ENCODE measurements at regions of chr2 and their contacts with region 1.

Region 1: DNA sequence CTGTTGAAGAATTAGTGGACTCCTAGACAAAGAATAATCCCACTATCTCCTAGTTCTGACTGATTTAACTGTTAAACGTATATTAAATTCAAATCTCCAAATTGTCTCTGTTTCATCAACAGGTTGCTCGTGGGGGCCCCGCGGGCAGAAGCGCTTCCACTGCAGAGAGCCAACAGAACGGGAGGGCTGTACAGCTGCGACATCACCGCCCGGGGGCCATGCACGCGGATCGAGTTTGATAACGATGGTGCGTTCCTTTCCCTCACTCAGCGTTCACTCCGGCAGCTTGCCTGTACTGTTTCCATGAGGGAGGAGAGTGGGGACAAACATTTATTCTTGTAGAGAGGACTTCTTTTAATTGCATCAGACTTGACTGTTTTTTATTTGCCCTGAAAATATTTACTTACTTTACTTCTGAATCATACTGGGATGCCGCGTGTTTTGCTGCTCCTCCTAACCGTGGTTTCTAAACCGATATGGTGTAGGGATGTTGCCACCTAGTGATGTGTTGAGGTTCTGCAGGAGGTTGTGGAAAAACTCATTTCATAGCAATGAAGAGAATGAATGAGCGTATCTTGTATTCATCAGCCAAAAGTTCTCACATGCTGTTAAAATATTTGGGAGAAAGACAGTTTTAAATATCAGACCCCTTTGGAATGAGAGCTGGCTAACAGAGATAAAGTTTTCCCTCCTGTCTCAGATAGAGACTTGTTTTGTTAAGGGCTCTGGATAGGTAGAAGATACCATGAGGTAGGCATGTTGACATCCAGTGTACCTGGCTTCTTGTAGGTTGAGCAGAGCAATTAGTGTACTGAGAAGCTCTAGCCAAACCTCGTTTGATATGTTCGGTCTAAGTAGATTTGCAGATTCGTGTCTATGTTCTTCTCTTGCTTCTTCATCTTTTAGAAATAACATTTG is 38.3 kb downstream of the ITGA6 start:
- DNase-seq: peak; percentile 75
- ATAC-seq: peak; percentile 71
- H3K4me3 ChIP-seq: no peak overlapping the region
- H3K4me3 Mint-ChIP-seq: no peak overlapping the region
- H3K27ac ChIP-seq: no peak overlapping the region
- H3K27ac Mint-ChIP-seq: no peak overlapping the region
- H3K4me1 ChIP-seq: peaks cover 39 to 43% of the 10 kb centered on the region in 2 donors
- H3K4me1 Mint-ChIP-seq: peaks cover 49% of the 10 kb centered on the region
- H3K27me3 ChIP-seq: no peaks in the 10 kb centered on the region
- H3K27me3 Mint-ChIP-seq: peaks cover 8% of the 10 kb centered on the region
- CTCF ChIP-seq: peak; percentile 87

Region 2: DNA sequence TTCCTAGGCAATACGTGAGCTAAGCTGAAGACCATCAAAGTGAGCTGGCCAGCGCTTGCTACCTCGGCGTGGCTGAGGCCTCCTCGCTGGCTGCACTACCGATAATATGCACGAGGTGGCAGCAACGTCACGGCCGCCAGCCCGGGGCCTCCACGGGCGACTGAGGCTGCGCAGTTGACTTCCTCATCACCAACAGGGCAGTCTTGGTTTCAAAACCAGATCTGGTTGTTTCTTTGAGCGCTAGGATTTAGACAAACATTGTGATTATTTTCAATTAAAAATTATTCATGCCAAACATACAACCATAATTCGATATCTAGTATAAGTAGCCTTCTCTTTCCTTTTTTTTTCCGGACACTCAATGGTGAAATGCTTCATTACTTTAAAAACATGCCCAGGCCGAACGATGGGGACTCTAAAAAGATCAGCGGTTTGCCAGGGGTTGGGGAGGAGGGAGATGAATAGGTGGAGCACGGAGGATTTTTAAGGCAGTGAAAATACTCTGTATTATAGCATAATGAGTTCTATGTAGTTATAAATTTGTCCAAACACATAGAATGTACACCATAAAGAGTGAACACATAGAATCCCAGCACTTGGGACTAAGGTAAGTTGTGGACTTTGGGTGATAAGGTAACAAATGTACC is 891.4 kb before region 1 on chr2:
- CTCF ChIA-PET with region 1: interaction called, 19 read pairs
- POLR2A ChIA-PET with region 1: no interaction called
- intact Hi-C with region 1: loop called (anchors 1 kb)
- DNase-seq: peak; percentile 87
- ATAC-seq: peak; percentile 100
- H3K4me3 ChIP-seq: peak overlapping the region in 1 of 5 experiments; percentile 5
- H3K4me3 Mint-ChIP-seq: peak overlapping the region; percentile 37
- H3K27ac ChIP-seq: no peak overlapping the region
- H3K27ac Mint-ChIP-seq: no peak overlapping the region
- H3K4me1 ChIP-seq: peaks cover 0 to 4% of the 10 kb centered on the region in 2 donors
- H3K4me1 Mint-ChIP-seq: peaks cover 6% of the 10 kb centered on the region
- H3K27me3 ChIP-seq: no peaks in the 10 kb centered on the region
- H3K27me3 Mint-ChIP-seq: peaks cover 8% of the 10 kb centered on the region
- CTCF ChIP-seq: peak; percentile 97

Region 3: DNA sequence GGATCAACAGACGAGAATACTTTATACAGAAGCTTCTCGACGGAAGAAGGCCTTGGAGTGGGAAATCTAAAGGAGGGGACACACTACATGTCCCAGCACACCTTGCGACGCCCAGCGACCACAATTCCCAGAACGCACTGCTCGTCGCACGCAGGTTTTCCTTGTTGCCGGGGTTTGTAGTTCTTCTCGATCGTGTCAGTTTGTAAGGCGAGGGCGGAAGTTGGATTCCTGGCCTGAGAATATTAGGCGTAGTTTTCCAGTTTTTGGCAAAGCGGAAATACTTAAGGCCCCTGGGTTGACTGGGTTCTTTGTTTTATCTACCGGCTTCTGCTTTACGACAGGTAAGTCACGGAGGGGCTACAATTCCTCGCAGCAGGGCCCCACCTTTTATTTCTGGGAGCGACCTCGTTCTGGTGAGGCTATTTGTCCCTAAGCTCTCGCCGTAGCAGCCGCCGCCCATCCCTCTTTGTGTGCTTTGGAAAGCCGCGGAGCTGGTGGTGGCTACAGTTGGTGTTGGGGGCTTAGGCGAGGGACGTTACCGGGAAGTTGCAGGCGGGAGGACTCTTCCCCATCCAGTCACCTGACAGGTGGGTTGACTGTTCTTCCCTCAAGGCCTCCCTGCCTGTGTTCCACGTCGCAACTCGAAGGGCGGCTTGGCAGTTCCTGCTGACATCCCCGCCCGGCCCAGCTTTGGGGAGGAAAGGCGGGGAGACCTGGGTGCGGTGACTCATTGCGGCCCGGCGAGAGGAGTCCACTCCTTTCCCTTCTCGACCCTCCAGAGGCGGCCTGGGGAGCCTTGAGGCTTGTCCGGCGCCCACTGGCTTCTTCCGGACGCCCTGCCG is 778.2 kb before region 1 on chr2 and contains the start of gene DYNC1I2:
- CTCF ChIA-PET with region 1: interaction called, 3 read pairs
- POLR2A ChIA-PET with region 1: no interaction called
- intact Hi-C with region 1: loop called (anchors 5 kb)
- DNase-seq: peak; percentile 88
- ATAC-seq: peak; percentile 92
- H3K4me3 ChIP-seq: peak within 1 kb of the TSS; percentile 77 to 89 (median 88)
- H3K4me3 Mint-ChIP-seq: peak within 1 kb of the TSS; percentile 93
- H3K27ac ChIP-seq: peak within 1 kb of the TSS; percentile 58 to 83
- H3K27ac Mint-ChIP-seq: peak within 1 kb of the TSS; percentile 85
- H3K4me1 ChIP-seq: peaks cover 12 to 13% of the 10 kb centered on the region in 2 donors
- H3K4me1 Mint-ChIP-seq: peaks cover 18% of the 10 kb centered on the region
- H3K27me3 ChIP-seq: no peaks in the 10 kb centered on the region
- H3K27me3 Mint-ChIP-seq: peaks cover 9% of the 10 kb centered on the region
- CTCF ChIP-seq: no peak
- total RNA-seq, gene DYNC1I2: 53.9 and 57.6 TPM in 2 replicates

Region 4: GRCh38 chr2:171811245-171811628 is 654.4 kb before region 1 on chr2:
- CTCF ChIA-PET with region 1: interaction called, 6 read pairs
- POLR2A ChIA-PET with region 1: no interaction called
- intact Hi-C with region 1: loop called (anchors 2 kb)
- DNase-seq: peak; percentile 10
- ATAC-seq: no peak
- H3K4me3 ChIP-seq: no peak overlapping the region
- H3K4me3 Mint-ChIP-seq: no peak overlapping the region
- H3K27ac ChIP-seq: no peak overlapping the region
- H3K27ac Mint-ChIP-seq: no peak overlapping the region
- H3K4me1 ChIP-seq: no peaks in the 10 kb centered on the region
- H3K4me1 Mint-ChIP-seq: no peaks in the 10 kb centered on the region
- H3K27me3 ChIP-seq: no peaks in the 10 kb centered on the region
- H3K27me3 Mint-ChIP-seq: no peaks in the 10 kb centered on the region
- CTCF ChIP-seq: no peak

Region 5: GRCh38 chr2:172427256-172427989 is 38.3 kb before region 1 on chr2 and contains the start of gene ITGA6:
- CTCF ChIA-PET with region 1: interaction called, 10 read pairs
- POLR2A ChIA-PET with region 1: no interaction called
- intact Hi-C with region 1: loop called (anchors 5 kb)
- DNase-seq: peak; percentile 65
- ATAC-seq: peak; percentile 64
- H3K4me3 ChIP-seq: peak within 1 kb of the TSS; percentile 35 to 63 (median 53)
- H3K4me3 Mint-ChIP-seq: peak within 1 kb of the TSS; percentile 86
- H3K27ac ChIP-seq: no peak within 1 kb of the TSS
- H3K27ac Mint-ChIP-seq: no peak within 1 kb of the TSS
- H3K4me1 ChIP-seq: peaks cover 18 to 20% of the 10 kb centered on the region in 2 donors
- H3K4me1 Mint-ChIP-seq: peaks cover 14% of the 10 kb centered on the region
- H3K27me3 ChIP-seq: peaks cover 0 to 58% (median 44%) of the 10 kb centered on the region in 4 experiments
- H3K27me3 Mint-ChIP-seq: peaks cover 79% of the 10 kb centered on the region
- CTCF ChIP-seq: no peak
- total RNA-seq, gene ITGA6: 0.17 and 0.24 TPM in 2 replicates

Region 6: DNA sequence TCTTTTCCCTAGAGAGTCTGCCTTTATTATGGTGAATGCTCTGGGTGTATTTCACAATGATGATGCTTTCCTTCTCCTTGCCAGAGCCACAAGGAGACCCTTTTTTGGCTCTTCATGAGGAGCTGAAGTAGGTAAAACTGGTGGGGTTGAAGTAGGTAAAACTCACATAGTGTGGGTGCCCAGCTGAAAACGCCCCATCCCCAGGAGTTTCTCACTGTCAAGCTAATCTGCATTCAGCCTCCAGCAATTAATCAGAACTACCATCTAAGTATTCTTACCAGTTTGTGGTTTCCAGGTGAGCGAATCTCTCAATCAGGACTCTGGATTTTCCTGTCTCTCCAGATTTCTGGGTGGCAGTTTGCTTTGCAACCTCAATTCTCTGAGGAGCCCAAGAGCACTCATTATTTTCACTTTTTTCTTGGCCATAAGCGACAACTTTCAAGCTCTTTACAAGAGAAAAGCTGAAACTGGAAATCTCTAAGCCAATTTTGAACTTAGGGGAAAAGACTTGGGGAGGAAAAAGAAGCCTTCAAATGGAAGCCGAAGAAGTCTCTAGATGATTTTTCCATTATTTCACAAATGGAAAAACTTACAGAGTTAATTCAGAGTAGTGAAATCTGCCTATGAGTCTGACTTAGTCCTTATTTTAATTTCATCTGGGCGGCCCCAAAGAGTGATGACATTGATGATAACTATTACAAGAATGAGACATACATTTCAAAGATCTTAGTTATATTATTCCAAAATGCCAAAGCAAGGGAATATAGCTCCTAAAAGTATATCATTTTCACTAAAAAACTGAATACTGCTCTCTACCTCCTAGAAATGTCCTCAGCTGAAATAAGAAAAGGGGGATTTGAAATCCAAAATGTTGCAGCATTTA is 488.5 kb after region 1 on chr2:
- CTCF ChIA-PET with region 1: no interaction called
- POLR2A ChIA-PET with region 1: no interaction called
- intact Hi-C with region 1: no loop called
- DNase-seq: no peak
- ATAC-seq: no peak
- H3K4me3 ChIP-seq: no peak overlapping the region
- H3K4me3 Mint-ChIP-seq: no peak overlapping the region
- H3K27ac ChIP-seq: no peak overlapping the region
- H3K27ac Mint-ChIP-seq: no peak overlapping the region
- H3K4me1 ChIP-seq: no peaks in the 10 kb centered on the region
- H3K4me1 Mint-ChIP-seq: no peaks in the 10 kb centered on the region
- H3K27me3 ChIP-seq: no peaks in the 10 kb centered on the region
- H3K27me3 Mint-ChIP-seq: peaks cover 18% of the 10 kb centered on the region
- CTCF ChIP-seq: no peak